Heart left ventricle (tissue), 16 donors: ENCODE measurements at regions of chr6 and their contacts with region 1.

Region 1: DNA sequence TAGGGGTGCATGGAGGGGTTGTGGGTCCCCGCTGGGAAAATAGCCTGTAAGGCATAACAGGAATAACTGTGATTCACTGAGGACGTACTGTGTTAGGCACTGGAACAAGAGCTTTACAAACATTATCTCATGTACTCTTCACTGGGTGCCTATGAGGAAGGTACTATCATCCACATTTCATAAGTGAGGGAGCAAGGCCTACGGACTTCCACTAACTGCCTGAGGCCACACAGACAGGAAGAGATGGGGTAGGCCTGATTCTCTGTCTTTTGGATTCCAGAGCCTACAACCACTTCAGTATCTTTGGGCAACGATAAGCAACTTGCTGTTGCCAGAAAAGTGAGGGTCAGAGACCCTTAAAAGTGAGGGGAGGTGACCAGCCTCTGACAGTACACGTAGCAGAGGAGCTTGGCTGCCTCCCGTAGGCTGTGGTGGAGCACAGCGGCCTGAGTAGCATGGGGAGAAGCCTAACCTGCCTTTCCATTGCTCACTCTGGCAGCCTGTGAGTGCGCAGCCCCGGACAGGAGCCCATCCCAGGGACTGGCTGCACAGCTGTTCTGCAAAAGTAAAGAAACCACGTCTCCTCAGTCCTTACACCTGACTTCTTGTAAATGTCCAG is 30.4 kb downstream of the PSMB1 start:
- DNase-seq: peak in 2 of 5 donors; percentile 24 to 38
- ATAC-seq: peak in 3 of 4 donors; percentile 48 to 56 (median 51)
- H3K4me3 ChIP-seq: no peak overlapping the region
- H3K27ac ChIP-seq: peak overlapping the region in 11 of 12 donors; percentile 2 to 88 (median 73)
- H3K4me1 ChIP-seq: peaks cover 0 to 28% (median 21%) of the 10 kb centered on the region in 12 donors
- H3K27me3 ChIP-seq: no peaks in the 10 kb centered on the region
- CTCF ChIP-seq: peak in 4 of 12 donors; percentile 5 to 37 (median 29)
- POLR2A ChIP-seq: no peak

Region 2: GRCh38 chr6:169789982-169790927 is 732.4 kb before region 1 on chr6:
- intact Hi-C with region 1: loop called in 4 of 10 experiments (anchors 2 to 5 kb)
- DNase-seq: peak; percentile 68 to 89 (median 71)
- ATAC-seq: peak; percentile 88 to 98 (median 96)
- H3K4me3 ChIP-seq: peak overlapping the region in 11 of 12 donors; percentile 14 to 63 (median 49)
- H3K27ac ChIP-seq: peak overlapping the region in 9 of 12 donors; percentile 10 to 82 (median 54)
- H3K4me1 ChIP-seq: peaks cover 0 to 18% (median 13%) of the 10 kb centered on the region in 12 donors
- H3K27me3 ChIP-seq: peaks cover 0 to 13% (median 0%) of the 10 kb centered on the region in 9 donors
- CTCF ChIP-seq: peak; percentile 87 to 98 (median 96)
- POLR2A ChIP-seq: no peak

Region 3: DNA sequence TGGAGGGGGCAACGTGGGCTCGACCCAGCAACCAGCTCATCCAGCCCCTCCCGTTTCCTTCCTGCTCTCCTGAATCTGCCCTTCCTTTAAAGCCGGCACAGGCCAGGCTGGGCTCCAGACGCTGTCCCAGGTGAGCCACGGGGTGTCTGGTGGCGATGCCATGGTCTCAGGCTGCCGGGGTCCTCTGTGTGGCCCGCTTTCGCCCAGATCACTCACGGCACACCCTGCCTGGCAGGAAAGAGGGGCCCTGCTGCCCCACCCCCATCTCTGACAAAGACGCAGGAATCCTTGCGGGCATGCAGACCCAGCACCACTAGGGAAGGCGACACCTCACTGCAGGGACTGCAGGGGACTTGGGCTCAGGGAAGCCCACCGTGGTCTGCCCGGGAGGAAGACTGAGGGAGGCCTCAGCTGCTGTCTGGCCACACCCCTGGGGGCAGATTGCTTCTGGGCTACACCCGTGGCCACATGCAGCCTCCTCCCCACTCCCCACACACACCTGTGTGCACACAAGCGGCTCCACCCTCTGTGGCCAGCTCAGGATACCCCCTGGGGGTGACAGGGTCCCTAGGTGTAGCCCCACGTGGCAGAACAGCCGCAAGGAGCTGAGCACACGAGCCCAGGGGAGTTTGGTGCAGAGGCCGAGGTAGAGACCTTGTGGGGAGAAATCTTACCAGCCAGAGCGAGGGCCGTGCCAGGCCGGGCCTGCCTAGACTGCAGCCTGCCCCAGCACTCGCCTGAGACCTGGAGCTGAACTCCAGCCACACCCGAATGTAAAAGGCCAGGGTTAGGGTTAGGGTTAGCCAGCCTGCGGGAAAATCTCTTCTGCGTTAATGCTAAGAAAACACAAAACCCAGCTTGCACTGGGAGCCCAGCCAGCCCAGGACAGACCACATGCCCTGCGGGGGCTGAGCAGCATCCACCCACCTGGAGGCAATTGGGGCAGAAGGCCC is 336.4 kb before region 1 on chr6:
- intact Hi-C with region 1: no loop called
- DNase-seq: no peak
- ATAC-seq: no peak
- H3K4me3 ChIP-seq: no peak overlapping the region
- H3K27ac ChIP-seq: no peak overlapping the region
- H3K4me1 ChIP-seq: peaks cover 0 to 3% (median 0%) of the 10 kb centered on the region in 12 donors
- H3K27me3 ChIP-seq: no peaks in the 10 kb centered on the region
- CTCF ChIP-seq: no peak
- POLR2A ChIP-seq: no peak

Region 4: GRCh38 chr6:170279977-170280688 is 242.5 kb before region 1 on chr6:
- intact Hi-C with region 1: no loop called
- DNase-seq: peak in 3 of 5 donors; percentile 74 to 81 (median 76)
- ATAC-seq: peak; percentile 32 to 75 (median 58)
- H3K4me3 ChIP-seq: peak overlapping the region in 8 of 12 donors; percentile 4 to 51 (median 32)
- H3K27ac ChIP-seq: peak overlapping the region in 8 of 12 donors; percentile 23 to 73 (median 58)
- H3K4me1 ChIP-seq: peaks cover 7 to 58% (median 34%) of the 10 kb centered on the region in 12 donors
- H3K27me3 ChIP-seq: no peaks in the 10 kb centered on the region
- CTCF ChIP-seq: peak in 1 of 12 donors; percentile 12
- POLR2A ChIP-seq: no peak

Region 5: DNA sequence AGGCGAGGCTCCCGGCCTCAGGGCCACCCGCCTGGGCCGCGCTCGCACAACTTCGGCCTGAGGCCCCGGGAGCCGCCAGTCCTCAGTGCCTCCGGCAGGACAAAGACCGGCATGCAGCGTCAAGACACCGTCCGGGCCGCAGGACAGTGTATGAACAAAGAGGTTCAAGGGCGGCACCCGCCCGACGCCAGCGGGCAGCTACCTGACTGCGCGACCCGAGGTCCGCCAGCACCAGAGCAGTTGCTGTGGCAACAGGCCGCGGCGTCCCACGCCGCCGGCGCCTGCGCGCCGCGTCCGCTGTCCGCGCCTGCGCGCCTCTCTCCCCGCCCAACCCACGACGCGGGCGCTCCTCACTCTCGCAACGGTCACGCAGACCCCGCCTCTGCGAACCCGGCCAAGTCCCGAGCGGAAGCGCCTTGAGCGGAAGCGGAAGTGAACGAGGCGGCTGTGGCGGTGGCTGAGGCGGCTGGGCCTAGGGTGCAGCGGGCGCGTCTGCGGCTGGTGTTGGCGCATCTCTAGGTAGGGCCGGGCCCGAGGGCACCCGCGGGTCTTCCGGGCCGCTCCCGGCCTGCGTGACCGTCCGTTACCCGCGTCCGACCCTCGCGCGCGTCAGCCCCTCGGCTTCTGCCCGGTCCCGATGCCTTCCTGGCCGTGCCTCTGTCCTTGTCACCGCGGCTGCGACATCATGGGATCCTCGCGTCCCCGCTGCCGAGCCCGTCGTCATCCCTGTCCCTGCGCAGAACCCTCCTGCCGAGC is 216.2 kb before region 1 on chr6 and contains the start of gene FAM120B:
- intact Hi-C with region 1: loop called in 5 of 10 experiments (anchors 5 to 10 kb)
- DNase-seq: peak; percentile 97 to 99 (median 98)
- ATAC-seq: peak; percentile 98 to 99 (median 99)
- H3K4me3 ChIP-seq: peak within 1 kb of the TSS; percentile 77 to 99 (median 94)
- H3K27ac ChIP-seq: peak within 1 kb of the TSS; percentile 79 to 96 (median 92)
- H3K4me1 ChIP-seq: peaks cover 5 to 50% (median 35%) of the 10 kb centered on the region in 12 donors
- H3K27me3 ChIP-seq: no peaks in the 10 kb centered on the region
- CTCF ChIP-seq: no peak
- POLR2A ChIP-seq: peak; percentile 32 to 95
- total RNA-seq, gene FAM120B: 12.1 to 29.4 (median 19.9) TPM